RWPE1 (cell line): ENCODE measurements at regions of chr11 and their contacts with region 1.

Region 1: GRCh38 chr11:38988908-38989307 is 2390.9 kb upstream of the RAG2 start:
- DNase-seq: no peak
- H3K27ac ChIP-seq: no peak overlapping the region
- CTCF ChIP-seq: no peak

Region 2: GRCh38 chr11:37076866-37077265 is 1912.0 kb before region 1 on chr11:
- CTCF ChIA-PET with region 1: no interaction called
- POLR2A ChIA-PET with region 1: interaction called, 13 read pairs
- DNase-seq: no peak
- H3K27ac ChIP-seq: no peak overlapping the region
- CTCF ChIP-seq: no peak

Region 3: DNA sequence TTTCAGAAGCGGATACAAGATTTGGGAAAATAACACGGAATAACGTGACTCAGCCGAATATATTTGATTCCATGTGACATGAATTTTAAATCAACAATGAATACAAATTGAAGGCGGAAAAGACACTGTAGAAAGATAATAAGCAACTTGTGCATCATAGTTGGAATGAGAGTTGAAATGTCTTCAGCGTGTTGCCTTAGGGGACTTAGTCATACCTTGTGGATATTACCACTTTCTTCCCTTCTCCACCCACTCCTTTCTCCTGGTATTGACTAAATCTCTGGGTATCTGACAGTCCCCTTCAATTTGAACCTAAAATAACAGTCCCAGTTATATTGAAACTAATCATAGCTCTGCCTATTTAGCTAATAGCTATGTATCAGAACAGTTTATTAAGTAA is 17.8 kb before region 1 on chr11:
- CTCF ChIA-PET with region 1: no interaction called
- POLR2A ChIA-PET with region 1: no interaction called
- DNase-seq: peak; percentile 81
- H3K27ac ChIP-seq: no peak overlapping the region
- CTCF ChIP-seq: no peak

Region 4: GRCh38 chr11:39011797-39012196 is 22.9 kb after region 1 on chr11:
- CTCF ChIA-PET with region 1: no interaction called
- POLR2A ChIA-PET with region 1: no interaction called
- DNase-seq: no peak
- H3K27ac ChIP-seq: no peak overlapping the region
- CTCF ChIP-seq: no peak

Region 5: GRCh38 chr11:39434466-39434865 is 445.6 kb after region 1 on chr11:
- CTCF ChIA-PET with region 1: no interaction called
- POLR2A ChIA-PET with region 1: no interaction called
- DNase-seq: no peak
- H3K27ac ChIP-seq: no peak overlapping the region
- CTCF ChIP-seq: no peak